Activated CD4-positive, alpha-beta T cell treated with anti-CD3 and anti-CD28 coated beads, Interleukin-2, amount 10 ng/mL, durations not matched to agents 7 days and 5 days (primary cell): ENCODE measurements at regions of chr2 and their contacts with region 1.

Region 1: DNA sequence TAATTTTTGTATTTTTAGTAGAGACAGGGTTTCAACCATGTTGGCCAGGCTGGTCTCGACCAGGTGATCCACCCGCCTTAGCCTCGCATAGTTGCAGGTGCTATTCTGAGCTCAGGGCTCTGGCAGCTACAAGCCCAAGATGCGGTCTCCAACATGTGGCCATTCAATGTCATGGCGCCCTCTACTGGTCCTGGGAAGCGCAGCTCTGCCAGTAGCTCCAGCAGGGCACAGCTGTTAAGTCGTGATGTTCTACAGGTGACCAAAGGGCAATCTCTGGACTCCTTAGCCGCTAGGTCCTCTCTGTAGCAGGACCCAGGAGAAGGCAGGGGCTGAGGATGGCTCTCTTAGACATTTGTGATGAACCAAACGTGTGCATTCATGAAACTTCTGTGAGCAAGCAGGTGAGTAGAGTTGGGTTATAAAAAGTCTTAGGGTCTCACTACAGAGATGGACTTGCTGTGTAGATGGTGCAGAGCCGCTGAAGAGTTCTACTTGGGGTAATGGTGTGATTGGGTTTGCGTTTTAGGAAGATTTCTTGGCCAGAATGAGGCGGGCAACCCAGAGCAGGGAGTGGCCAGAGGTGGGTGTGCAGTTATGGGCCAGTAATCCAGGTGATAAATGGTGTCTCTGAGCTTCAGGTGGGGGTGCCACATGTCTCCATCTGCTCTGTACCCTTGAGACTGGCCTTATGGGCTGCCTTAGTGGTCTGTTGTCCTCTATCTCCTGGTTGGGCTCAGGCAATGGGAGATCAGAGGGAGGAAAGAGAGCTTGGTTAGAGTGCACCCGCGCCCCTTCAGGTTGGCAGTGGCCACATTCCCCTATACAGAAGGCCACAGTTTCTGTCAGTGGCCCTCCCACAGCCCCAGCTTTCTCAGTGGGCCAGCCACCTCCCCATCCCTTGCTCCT is 31.0 kb downstream of the IL37 start:
- DNase-seq: peak; percentile 85
- H3K4me3 Mint-ChIP-seq: no peak overlapping the region
- H3K27ac Mint-ChIP-seq: no peak overlapping the region
- H3K4me1 Mint-ChIP-seq: no peaks in the 10 kb centered on the region
- H3K27me3 Mint-ChIP-seq: peaks cover 9% of the 10 kb centered on the region

Region 2: DNA sequence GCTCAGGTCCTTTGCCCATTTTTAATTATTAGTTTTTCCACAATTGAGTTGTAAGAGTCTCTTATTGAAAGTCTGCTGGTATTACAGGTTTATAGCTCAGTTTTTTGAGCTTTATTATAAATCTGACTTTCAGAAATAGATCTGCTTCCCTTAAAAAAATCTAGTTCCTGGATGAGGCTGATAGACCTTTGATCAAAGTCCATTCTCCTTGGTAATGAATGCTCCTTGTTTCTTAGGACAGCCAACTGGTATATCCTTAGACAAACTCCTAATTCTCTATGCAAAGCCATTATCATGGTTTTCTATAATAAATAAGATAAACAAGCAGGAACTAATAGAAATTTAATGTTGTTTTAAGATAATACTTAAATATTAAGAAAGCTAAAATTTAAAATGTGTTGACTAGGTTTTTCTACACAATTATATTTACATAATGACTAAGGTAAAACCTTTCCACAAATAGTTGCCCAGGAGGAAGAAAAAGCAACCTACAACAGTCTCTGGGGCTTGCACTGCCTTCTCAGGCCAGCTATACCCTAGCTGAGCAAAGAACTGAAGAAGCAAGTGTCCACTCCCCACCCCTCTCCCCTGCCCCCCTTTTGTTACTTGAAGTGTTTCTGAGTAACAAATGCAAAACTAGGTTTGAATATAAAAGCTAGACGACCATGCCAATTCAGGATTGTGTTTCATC is 204.3 kb before region 1 on chr2:
- CTCF ChIA-PET with region 1: interaction called, 27 read pairs
- POLR2A ChIA-PET with region 1: interaction called, 3 read pairs
- DNase-seq: no peak
- H3K4me3 Mint-ChIP-seq: no peak overlapping the region
- H3K27ac Mint-ChIP-seq: no peak overlapping the region
- H3K4me1 Mint-ChIP-seq: no peaks in the 10 kb centered on the region
- H3K27me3 Mint-ChIP-seq: no peaks in the 10 kb centered on the region

Region 3: DNA sequence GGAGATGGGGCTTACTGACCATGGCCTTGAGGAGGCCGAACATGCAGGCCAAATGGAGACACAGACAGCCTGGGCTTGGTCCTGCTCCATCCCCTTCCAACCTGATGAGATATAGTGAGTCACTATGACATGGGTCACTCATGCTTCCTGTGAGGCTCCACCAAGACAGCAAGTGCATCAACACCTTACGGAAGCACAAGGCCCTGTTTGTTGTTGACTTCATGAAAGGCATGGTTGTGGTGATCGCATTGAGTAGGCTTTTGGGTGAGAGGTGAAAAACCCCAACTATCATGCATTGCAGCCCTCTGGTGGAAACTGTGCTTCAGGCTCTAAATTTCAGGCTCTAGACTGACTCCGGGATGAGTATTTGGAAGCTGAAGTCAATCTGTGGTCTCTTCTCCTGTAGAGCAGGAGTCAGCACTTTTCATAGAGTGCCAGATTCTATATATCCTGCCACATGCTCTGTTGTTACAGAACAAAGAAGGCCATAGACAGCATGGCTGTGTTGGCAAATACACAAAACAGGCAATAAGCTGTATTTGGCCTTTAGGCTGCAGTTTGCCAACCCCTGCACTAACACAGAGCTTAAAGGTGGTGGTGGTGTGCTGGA is 21.0 kb before region 1 on chr2:
- CTCF ChIA-PET with region 1: interaction called, 24 read pairs
- POLR2A ChIA-PET with region 1: no interaction called
- DNase-seq: no peak
- H3K4me3 Mint-ChIP-seq: no peak overlapping the region
- H3K27ac Mint-ChIP-seq: no peak overlapping the region
- H3K4me1 Mint-ChIP-seq: peaks cover 10% of the 10 kb centered on the region
- H3K27me3 Mint-ChIP-seq: peaks cover 1% of the 10 kb centered on the region

Region 4: DNA sequence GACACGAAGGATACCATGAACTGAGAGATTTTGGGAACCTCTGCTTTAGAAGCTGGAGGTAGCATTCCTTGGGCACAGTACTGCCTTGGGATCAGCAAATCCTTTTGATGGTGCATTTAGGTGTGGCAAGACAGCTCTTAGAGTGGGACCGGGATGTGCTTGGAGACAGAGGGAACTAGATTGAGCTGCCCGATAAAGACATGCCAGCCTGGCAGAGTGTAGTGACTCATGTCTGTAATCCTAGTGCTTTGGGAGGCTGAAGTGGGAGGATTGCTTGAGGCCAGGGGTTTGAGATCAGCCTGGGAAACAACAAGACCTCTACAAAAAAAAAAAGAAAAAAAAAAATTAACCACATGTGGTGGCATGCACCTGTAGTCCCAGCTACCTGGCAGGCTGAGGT is 13.2 kb before region 1 on chr2:
- CTCF ChIA-PET with region 1: interaction called, 12 read pairs
- POLR2A ChIA-PET with region 1: no interaction called
- DNase-seq: no peak
- H3K4me3 Mint-ChIP-seq: no peak overlapping the region
- H3K27ac Mint-ChIP-seq: no peak overlapping the region
- H3K4me1 Mint-ChIP-seq: no peaks in the 10 kb centered on the region
- H3K27me3 Mint-ChIP-seq: peaks cover 1% of the 10 kb centered on the region